Left colon (tissue), 2 donors: ENCODE measurements at regions of chr18 and their contacts with region 1.

Region 1: DNA sequence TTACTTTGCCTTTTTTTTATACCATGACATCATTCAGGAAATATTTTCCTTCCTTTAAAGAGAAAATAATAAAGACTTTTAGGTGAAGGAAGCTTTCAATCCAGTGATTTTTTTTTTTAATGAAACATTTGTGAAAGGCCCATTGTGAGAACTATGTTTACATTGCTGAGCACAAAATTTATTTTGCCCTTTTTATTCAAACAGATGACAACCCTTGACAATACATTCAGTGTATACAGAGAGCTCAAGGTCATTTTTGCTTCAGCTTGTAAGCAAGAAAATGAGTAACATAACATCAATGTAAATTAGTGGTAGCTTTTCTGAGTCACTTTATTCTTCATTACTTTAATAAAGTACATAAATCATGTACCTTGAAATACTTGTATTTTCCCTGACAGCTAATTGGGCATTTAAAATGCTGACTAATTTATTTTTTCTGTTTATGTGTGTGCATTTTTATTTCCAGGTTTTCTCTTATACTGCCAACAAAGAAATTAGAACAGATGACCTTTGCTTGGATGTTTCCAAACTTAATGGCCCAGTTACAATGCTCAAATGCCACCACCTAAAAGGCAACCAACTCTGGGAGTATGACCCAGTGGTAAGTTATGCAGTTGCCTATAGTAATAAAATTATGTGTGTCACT is 121.6 kb downstream of the GALNT1 start:
- DNase-seq: no peak
- ATAC-seq: peak; percentile 40

Region 2: GRCh38 chr18:35835833-35836232 is 132.7 kb after region 1 on chr18:
- intact Hi-C with region 1: loop called in 1 of 2 experiments (anchors 10 kb)
- DNase-seq: no peak
- ATAC-seq: no peak